ENCODE measurements at regions of chr14 and their contacts with region 1.

Region 1: GRCh38 chr14:95534299-95535225 is at the start of gene GLRX5:
- DNase-seq: peak; percentile 98 to 99 (median 99)
- ATAC-seq: peak; percentile 95 to 98 (median 97)
- H3K4me3 ChIP-seq: peak within 1 kb of the TSS; percentile 69 to 99 (median 90)
- H3K27ac ChIP-seq: peak within 1 kb of the TSS; percentile 72 to 89 (median 84)
- H3K4me1 ChIP-seq: peaks cover 8 to 79% (median 67%) of the 10 kb centered on the region in 12 donors
- H3K27me3 ChIP-seq: no peaks in the 10 kb centered on the region
- CTCF ChIP-seq: peak in 8 of 12 donors; percentile 7 to 44 (median 13)
- POLR2A ChIP-seq: peak; percentile 64 to 65
- total RNA-seq, gene GLRX5: 60.8 to 113 (median 78.5) TPM

Region 2: DNA sequence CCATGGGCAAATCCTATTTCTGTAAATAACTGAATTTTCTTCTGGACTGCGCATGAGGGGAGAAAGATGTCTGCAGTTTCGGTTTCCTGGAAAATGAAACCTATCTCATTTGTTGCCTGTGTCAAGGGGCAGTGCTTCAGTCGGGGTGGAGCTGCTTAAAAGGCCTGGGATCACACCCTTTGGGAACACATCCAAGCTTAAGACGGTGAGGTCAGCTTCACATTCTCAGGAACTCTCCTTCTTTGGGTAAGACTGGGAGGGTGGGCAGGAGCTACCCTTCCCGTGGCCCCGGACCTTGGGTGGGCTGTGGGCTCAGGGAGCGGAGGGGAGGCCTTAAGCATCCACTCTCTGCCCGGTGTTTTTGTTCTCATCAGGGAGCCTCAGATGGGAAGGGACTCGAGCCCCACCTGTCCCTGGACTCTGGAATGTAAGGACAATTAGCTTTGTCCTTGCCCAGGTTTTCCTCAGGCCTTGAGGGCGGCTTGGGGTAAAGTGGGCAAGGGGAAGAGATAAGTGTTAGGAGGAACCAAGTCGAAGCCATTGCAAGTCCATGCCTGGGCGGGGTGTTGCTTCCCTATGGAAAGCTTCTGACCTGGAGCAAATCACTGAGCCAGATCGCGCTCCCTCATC is 1423.9 kb before region 1 on chr14 and contains the start of gene IFI27:
- intact Hi-C with region 1: loop called in 1 of 10 experiments (anchors 5 kb)
- DNase-seq: peak in 4 of 5 donors; percentile 74 to 84 (median 80)
- ATAC-seq: peak; percentile 25 to 84 (median 72)
- H3K4me3 ChIP-seq: peak within 1 kb of the TSS; percentile 38 to 81 (median 64)
- H3K27ac ChIP-seq: peak within 1 kb of the TSS; percentile 71 to 96 (median 92)
- H3K4me1 ChIP-seq: peaks cover 0 to 51% (median 39%) of the 10 kb centered on the region in 12 donors
- H3K27me3 ChIP-seq: no peaks in the 10 kb centered on the region
- CTCF ChIP-seq: no peak
- POLR2A ChIP-seq: peak in 1 of 2 donors; percentile 80
- total RNA-seq, gene IFI27: 135 to 458 (median 177) TPM

Region 3: DNA sequence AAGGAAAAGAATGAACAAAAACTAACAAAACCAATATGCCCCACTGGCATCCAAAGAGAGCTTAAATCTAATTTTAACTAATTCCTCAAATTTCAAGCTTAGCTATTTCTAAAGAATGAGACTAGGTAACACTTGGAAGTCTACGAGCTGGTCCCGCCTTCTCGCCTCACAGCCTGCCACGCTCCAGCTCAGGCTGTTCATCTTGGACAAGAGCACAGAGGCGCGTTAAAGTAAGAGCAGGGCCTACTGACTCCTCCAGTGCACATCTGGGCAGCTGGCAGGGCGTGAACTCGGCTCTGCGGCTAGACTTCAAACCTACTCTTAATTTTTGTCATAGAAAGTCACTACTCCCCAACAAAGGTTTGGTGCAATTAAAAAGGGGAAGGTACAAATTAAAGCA is 441.8 kb before region 1 on chr14:
- intact Hi-C with region 1: loop called in 1 of 10 experiments (anchors 5 kb)
- DNase-seq: no peak
- ATAC-seq: no peak
- H3K4me3 ChIP-seq: no peak overlapping the region
- H3K27ac ChIP-seq: no peak overlapping the region
- H3K4me1 ChIP-seq: peaks cover 0 to 27% (median 2%) of the 10 kb centered on the region in 12 donors
- H3K27me3 ChIP-seq: no peaks in the 10 kb centered on the region
- CTCF ChIP-seq: no peak
- POLR2A ChIP-seq: no peak

Region 4: GRCh38 chr14:96027431-96028355 is 493.1 kb after region 1 on chr14:
- intact Hi-C with region 1: no loop called
- DNase-seq: no peak
- ATAC-seq: no peak
- H3K4me3 ChIP-seq: no peak overlapping the region
- H3K27ac ChIP-seq: no peak overlapping the region
- H3K4me1 ChIP-seq: no peaks in the 10 kb centered on the region
- H3K27me3 ChIP-seq: peaks cover 0 to 24% (median 3%) of the 10 kb centered on the region in 9 donors
- CTCF ChIP-seq: no peak
- POLR2A ChIP-seq: no peak

Region 5: GRCh38 chr14:96391293-96392118 is 856.9 kb after region 1 on chr14:
- intact Hi-C with region 1: loop called in 1 of 10 experiments (anchors 5 kb)
- DNase-seq: peak; percentile 95 to 100 (median 97)
- ATAC-seq: peak; percentile 96 to 99 (median 98)
- H3K4me3 ChIP-seq: peak overlapping the region; percentile 53 to 88 (median 80)
- H3K27ac ChIP-seq: peak overlapping the region in 11 of 12 donors; percentile 3 to 81 (median 66)
- H3K4me1 ChIP-seq: peaks cover 0 to 16% (median 9%) of the 10 kb centered on the region in 12 donors
- H3K27me3 ChIP-seq: peaks cover 0 to 13% (median 0%) of the 10 kb centered on the region in 9 donors
- CTCF ChIP-seq: no peak
- POLR2A ChIP-seq: no peak